ENCODE measurements at regions of chr9 and their contacts with region 1.

Region 1: GRCh38 chr9:129962889-129963703 is 79.9 kb downstream of the FNBP1 start:
- DNase-seq: peak; percentile 86

Region 2: GRCh38 chr9:129932303-129933151 is 30.6 kb before region 1 on chr9:
- intact Hi-C with region 1: no loop called
- DNase-seq: no peak

Region 3: DNA sequence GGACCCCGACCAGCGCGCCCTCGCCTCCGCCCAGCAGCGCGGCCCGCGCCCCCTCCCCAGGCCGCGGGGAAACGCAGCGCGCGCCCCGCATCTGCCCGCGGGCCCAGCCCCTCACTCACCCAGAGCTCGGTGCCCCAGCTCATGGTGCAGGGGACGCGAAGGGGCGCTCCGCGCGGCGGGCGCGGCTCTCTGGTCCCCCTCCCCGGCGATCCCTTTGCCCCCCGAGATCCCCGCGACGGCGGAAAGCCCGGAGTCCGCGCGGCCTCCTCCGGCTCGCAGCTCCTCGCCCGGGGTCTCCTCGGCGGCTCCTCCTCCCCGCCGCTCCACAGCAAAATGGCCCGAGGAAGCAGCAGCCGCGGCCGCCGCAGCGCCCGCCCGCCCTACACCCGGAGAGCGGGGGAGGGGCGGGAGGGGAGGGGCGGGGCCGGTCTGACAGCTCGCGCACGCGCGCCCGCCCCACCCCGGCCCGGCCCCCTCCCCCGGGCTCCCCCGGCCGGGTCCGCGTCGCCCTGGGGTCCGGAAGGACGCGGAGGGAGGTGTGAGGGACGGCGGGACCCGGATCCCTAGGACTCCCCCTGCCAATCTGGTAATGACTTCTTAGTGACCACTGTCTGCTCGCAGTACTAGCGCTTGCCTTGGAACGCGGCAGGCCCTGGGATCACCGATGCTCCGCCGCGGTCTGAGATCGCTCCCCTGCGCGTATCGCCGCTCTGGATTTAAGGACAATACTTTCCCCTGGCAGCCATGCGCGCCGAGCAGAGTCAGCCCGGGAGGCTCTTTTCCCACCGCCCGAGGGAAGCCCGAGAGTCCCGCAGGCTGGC is 79.9 kb after region 1 on chr9 and contains the start of gene FNBP1:
- intact Hi-C with region 1: loop called (anchors 5 kb)
- DNase-seq: peak; percentile 93
- total RNA-seq, gene FNBP1: 22.6 TPM

Measured in cardiac septum (tissue), 1 donor.